ENCODE measurements at regions of chr7 and their contacts with region 1.

Region 1: DNA sequence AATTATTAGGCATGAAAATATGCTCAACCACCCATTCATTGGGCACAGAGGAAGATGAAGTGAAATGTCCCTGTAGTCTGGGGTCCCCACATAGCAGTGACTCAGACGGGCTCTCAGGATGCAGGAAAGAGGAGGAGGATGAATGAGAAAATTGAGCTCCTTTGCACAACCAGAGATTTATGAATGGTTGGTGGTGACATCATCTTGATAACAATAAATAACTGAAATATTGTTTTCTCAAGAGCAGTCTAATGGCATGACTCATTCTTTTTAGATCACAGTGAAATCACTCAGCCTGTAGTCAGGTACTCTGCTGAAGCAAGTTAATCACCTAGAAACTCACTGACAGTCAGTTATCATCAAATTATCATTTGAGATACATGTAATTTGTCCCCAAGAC is 254.1 kb downstream of the RELN start:
- DNase-seq: peak; percentile 24
- H3K4me3 Mint-ChIP-seq: no peak overlapping the region
- H3K27ac Mint-ChIP-seq: peak overlapping the region; percentile 42
- H3K4me1 Mint-ChIP-seq: peaks cover 19% of the 10 kb centered on the region
- H3K27me3 Mint-ChIP-seq: no peaks in the 10 kb centered on the region
- CTCF ChIP-seq: no peak

Region 2: GRCh38 chr7:103660455-103661371 is 74.7 kb before region 1 on chr7:
- CTCF ChIA-PET with region 1: no interaction called
- intact Hi-C with region 1: loop called (anchors 5 kb)
- DNase-seq: peak; percentile 22
- H3K4me3 Mint-ChIP-seq: no peak overlapping the region
- H3K27ac Mint-ChIP-seq: peak overlapping the region; percentile 83
- H3K4me1 Mint-ChIP-seq: peaks cover 52% of the 10 kb centered on the region
- H3K27me3 Mint-ChIP-seq: no peaks in the 10 kb centered on the region
- CTCF ChIP-seq: no peak

Region 3: DNA sequence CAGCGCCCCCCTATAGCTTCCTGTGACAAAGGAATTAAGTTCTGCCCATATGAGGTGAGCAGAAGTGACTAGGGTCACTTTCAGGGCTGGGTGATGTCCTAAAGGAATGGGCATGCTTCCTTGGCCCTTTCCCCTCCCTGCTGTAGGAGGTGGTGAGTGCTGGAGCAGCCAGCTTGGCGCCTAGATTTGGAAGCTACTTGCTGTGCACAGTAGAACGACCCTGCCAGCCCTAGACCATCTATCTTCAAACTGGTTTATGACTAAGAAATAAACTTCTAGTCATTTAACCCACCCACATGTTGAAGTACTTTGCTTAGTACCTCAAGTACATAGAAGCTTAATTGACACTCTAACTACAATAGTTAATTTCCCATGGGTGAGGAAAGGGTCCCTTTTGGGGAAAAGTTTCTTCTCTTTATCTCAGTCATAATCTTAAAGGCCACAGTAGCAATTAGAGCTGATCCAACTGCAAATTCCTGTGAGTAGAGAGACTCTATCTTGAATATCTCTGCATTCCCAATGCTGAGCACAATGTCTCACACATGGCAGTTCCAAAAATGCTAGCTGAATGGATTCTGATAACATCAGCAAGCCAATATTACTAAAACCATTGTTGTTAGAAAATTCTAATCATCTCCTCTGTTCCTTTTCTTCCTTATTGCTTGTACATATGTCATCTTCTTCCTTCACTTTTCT is 26.8 kb after region 1 on chr7:
- CTCF ChIA-PET with region 1: no interaction called
- intact Hi-C with region 1: no loop called
- DNase-seq: no peak
- H3K4me3 Mint-ChIP-seq: no peak overlapping the region
- H3K27ac Mint-ChIP-seq: no peak overlapping the region
- H3K4me1 Mint-ChIP-seq: no peaks in the 10 kb centered on the region
- H3K27me3 Mint-ChIP-seq: no peaks in the 10 kb centered on the region
- CTCF ChIP-seq: no peak

Region 4: DNA sequence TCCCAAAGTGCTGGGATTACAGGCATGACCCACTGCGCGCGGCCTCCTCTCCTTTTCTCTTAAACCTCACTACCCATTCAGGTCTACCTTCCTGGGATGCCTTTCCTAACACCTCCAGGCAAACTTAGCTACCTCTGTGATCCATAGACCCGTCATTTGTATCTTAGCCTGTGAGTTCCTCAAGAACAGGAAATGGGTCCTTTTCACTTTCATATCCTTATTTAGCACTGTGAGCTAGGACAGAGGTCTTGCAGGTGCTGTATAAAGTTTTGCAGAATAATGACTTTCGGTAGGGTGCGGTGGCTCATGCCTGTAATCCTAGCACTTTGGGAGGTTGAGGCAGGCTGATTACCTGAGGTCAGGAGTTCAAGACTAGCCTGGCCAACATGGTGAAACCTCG is 38.3 kb after region 1 on chr7:
- CTCF ChIA-PET with region 1: no interaction called
- intact Hi-C with region 1: no loop called
- DNase-seq: no peak
- H3K4me3 Mint-ChIP-seq: no peak overlapping the region
- H3K27ac Mint-ChIP-seq: no peak overlapping the region
- H3K4me1 Mint-ChIP-seq: no peaks in the 10 kb centered on the region
- H3K27me3 Mint-ChIP-seq: peaks cover 23% of the 10 kb centered on the region
- CTCF ChIP-seq: no peak